MCF 10A (cell line): ENCODE measurements at regions of chr20 and their contacts with region 1.

Region 1: GRCh38 chr20:38229376-38230252 is 30.9 kb downstream of the KIAA1755 start:
- DNase-seq: peak; percentile 57
- H3K4me3 Mint-ChIP-seq: no peak overlapping the region
- H3K27ac Mint-ChIP-seq: no peak overlapping the region
- H3K4me1 Mint-ChIP-seq: no peaks in the 10 kb centered on the region
- H3K27me3 Mint-ChIP-seq: no peaks in the 10 kb centered on the region
- CTCF ChIP-seq: peak; percentile 59

Region 2: DNA sequence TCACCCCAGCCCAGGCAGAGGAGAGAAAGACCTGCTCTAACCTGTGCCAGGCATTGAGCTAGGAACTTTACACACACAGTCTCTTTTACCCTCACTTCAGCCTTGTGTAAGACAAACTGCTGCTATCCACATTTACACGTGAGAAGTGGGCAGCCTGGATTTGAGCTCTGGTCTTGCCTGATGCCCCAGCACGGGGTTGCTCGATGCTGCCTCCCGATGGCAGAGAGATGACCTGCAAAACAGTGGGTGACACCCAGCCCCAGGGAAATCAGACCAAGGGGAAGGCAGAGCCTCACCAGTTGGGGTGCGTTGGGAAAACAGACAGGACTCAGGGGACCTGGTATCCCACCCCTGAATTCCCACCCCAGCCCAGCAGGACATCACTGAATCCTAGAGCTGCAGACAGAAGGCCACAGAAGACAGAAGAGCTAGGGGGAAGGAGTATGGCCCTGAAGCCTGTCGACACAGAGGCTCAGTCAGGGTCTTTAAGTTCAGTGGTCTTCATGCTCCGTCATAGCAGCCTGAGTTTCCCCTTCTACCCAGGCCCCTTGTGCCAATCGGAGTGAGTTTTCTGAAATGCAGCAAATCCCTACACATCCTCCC is 75.3 kb after region 1 on chr20:
- CTCF ChIA-PET with region 1: interaction called, 8 read pairs
- POLR2A ChIA-PET with region 1: interaction called, 4 read pairs
- intact Hi-C with region 1: loop called (anchors 1 kb)
- DNase-seq: peak; percentile 63
- H3K4me3 Mint-ChIP-seq: no peak overlapping the region
- H3K27ac Mint-ChIP-seq: no peak overlapping the region
- H3K4me1 Mint-ChIP-seq: no peaks in the 10 kb centered on the region
- H3K27me3 Mint-ChIP-seq: peaks cover 37% of the 10 kb centered on the region
- CTCF ChIP-seq: peak; percentile 55

Region 3: GRCh38 chr20:38321959-38322598 is 92.5 kb after region 1 on chr20:
- CTCF ChIA-PET with region 1: interaction called, 8 read pairs
- POLR2A ChIA-PET with region 1: no interaction called
- intact Hi-C with region 1: loop called (anchors 1 kb)
- DNase-seq: peak; percentile 63
- H3K4me3 Mint-ChIP-seq: no peak overlapping the region
- H3K27ac Mint-ChIP-seq: no peak overlapping the region
- H3K4me1 Mint-ChIP-seq: no peaks in the 10 kb centered on the region
- H3K27me3 Mint-ChIP-seq: peaks cover 40% of the 10 kb centered on the region
- CTCF ChIP-seq: peak; percentile 60

Region 4: GRCh38 chr20:38412877-38413577 is 183.4 kb after region 1 on chr20:
- CTCF ChIA-PET with region 1: interaction called, 11 read pairs
- POLR2A ChIA-PET with region 1: interaction called, 4 read pairs
- intact Hi-C with region 1: loop called (anchors 1 kb)
- DNase-seq: no peak
- H3K4me3 Mint-ChIP-seq: no peak overlapping the region
- H3K27ac Mint-ChIP-seq: no peak overlapping the region
- H3K4me1 Mint-ChIP-seq: no peaks in the 10 kb centered on the region
- H3K27me3 Mint-ChIP-seq: no peaks in the 10 kb centered on the region
- CTCF ChIP-seq: no peak